AG04449 (cell line): ENCODE measurements at regions of chr1 and their contacts with region 1.

Region 1: DNA sequence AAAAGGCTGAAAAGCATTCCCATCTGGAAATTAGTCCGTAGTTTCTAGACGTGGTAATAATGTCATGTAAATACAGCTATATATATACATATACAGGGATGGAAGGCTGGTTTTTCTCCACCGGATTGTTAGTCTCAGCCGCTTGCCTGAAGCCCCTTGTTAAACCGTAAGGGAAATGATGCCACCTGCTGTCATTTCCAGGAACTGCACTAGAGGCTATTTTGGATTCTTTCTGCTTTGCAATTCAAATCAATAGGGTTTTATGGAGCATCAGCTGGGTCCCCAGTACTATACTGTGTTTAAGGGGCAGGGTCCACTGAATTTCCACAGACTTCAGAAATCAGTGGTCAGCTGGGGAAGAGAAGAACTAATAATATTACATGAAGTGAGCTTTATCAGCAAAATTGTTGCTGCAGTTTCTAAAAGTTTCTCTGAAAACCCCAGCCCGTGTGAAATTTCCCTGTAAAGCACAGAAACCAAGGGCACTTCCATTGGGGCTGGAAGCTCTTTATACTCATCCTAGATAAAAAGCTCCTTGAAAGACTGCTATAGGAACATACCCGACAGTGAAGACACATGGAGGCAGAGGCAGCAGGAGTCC is 33.8 kb upstream of the MPZL1 start:
- DNase-seq: peak; percentile 51
- H3K4me3 ChIP-seq: no peak overlapping the region
- CTCF ChIP-seq: peak; percentile 80

Region 2: DNA sequence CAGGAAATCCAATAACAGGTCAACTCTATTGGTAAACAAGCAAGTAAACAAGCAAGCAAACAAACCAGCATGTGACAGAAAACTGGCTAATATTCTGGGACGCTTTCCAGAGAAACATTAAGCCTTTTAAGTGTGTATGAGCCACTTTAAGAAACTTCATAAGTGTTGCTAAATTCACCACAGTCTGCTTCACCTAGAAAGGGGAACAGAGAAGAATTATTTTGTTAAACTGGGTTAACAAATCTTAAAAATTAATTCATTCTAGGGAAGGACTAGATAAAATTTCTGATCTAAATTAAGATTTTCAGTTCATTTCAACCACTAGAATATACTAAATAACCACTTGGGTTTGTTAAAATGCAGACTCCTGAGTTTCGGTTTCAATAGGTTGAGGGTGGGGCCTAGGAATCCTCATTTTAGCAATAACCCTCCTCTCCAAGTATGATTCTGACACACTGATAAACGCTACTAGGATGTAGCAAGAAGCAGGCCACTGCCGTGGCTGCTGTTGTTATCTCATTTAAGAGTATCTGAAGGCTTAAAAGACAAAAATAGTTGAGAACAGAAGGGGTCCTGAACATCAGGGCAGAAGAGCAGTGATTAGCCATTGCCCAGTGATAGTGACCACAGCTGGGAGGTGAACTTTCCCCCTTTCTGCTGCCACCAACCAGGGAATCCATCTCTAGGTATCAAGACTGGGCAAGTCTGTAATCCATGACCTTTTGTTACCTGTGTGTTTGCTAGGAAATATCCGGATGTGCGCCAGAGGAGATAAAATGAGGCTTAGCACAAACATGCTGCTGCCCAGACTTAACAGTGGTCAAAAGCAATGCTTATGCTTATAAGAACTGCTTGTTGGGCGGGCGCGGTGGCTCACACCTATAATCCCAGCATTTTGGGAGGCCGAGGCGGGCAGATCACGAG is 145.6 kb before region 1 on chr1:
- CTCF ChIA-PET with region 1: interaction called, 14 read pairs
- POLR2A ChIA-PET with region 1: no interaction called
- DNase-seq: no peak
- H3K4me3 ChIP-seq: no peak overlapping the region
- CTCF ChIP-seq: no peak

Region 3: DNA sequence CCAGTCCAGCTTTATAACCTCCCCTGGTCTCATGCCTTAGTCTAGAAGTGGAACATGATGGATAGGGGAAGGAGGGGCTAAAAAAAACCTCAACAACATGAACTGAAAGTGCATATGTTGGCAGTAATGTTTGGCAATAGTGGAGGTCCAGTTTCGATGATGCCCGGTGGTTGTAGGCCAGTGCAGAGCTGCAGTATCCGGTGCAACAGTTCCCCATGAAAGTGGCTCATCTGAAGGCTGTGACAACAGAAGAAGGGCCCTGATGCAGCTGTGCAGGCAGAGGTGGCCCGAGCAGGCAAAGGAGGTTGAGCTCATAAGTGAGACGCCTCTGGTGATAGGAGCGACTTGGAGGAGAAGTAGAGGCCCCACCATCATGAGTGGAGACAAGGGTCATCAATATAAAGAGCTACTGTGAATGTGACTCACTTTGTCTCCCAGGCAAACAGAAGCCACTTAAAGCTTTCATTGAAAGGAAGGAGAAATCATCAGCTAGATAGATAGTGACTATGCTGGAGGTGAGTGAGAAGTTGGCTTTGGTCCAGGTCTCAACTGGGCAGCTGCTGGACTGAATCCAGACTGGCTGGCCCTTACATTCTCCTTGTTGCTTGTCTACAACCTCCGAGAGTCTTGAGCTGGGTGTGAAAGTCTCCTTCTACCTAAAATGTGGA is 124.3 kb before region 1 on chr1:
- CTCF ChIA-PET with region 1: interaction called, 32 read pairs
- POLR2A ChIA-PET with region 1: no interaction called
- DNase-seq: no peak
- H3K4me3 ChIP-seq: no peak overlapping the region
- CTCF ChIP-seq: no peak

Region 4: DNA sequence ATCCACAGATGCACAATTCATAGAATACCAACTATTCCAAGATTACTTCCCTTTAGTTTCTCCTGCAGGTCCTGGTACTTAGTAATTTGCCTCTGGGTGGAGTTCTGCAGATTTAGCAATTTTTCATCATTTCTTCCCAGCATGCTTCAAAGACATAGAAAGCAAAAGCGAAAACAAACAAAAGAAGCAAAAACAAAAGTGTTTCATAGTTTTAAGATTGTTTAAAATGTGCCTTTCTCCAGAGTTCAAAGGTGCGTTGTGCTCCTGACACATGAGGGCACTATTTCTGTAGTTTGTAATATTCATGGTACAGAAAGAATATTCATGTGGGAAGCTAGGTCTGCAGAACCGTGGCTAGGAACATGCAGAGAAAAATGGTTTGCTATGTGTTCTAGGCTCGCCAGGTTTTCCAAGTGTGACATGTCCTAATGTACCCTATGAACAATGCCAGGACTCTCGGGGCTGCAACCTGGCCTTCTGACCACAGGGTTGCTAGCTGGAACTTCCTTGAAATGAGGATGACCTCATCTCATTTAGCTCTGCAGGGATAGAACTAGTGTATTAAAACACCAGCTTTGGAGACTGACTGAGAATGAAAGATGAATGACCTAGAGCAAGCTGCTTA is 88.0 kb before region 1 on chr1:
- CTCF ChIA-PET with region 1: interaction called, 250 read pairs
- POLR2A ChIA-PET with region 1: no interaction called
- DNase-seq: no peak
- H3K4me3 ChIP-seq: no peak overlapping the region
- CTCF ChIP-seq: peak; percentile 44

Region 5: GRCh38 chr1:167650269-167651160 is 37.5 kb before region 1 on chr1:
- CTCF ChIA-PET with region 1: interaction called, 14 read pairs
- POLR2A ChIA-PET with region 1: no interaction called
- DNase-seq: no peak
- H3K4me3 ChIP-seq: no peak overlapping the region
- CTCF ChIP-seq: no peak

Region 6: DNA sequence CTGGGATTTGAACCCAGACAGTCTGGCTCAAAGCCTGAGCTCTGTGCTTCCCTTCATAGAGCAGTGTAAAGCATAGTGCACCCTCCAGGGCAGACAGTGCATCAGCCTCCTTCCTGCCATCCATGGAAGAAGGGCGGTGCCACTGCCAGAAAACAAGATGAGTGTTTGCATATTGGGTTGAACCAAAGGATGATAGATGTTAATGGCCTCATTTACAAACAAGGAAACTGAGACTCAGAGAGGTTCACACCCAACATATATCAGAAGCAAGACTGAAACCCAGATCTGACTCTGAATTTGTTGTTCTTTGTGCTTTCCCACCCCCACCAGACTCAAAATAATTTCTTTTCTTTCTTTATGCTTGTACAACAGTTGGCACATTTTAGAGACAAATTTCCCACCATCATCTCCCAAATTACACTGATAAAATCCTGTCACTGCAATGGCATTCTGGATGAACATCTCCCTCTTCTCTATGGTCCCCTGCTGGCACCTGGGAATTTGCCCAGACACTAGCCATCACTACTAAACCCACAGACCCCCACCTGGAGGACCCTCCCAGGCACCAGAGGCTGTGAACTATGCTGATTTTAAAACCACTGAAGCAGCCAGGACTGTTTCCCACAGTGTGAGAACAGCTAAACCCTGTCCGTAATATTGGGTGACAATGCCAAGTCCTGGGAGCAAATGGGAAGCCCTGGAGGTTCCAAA is 11.7 kb before region 1 on chr1:
- CTCF ChIA-PET with region 1: interaction called, 60 read pairs
- POLR2A ChIA-PET with region 1: no interaction called
- DNase-seq: no peak
- H3K4me3 ChIP-seq: no peak overlapping the region
- CTCF ChIP-seq: no peak

Region 7: GRCh38 chr1:167715157-167715999 is 27.4 kb after region 1 on chr1:
- CTCF ChIA-PET with region 1: interaction called, 15 read pairs
- POLR2A ChIA-PET with region 1: no interaction called
- DNase-seq: peak; percentile 44
- H3K4me3 ChIP-seq: peak overlapping the region; percentile 99
- CTCF ChIP-seq: peak; percentile 85